Dendritic cell treated with granulocyte-macrophage colony-stimulating factor and Interleukin-4, amounts not matched to agents 40 ng/mL and 50 ng/mL, for 4 days (primary cell): ENCODE measurements at regions of chr13 and their contacts with region 1.

Region 1: DNA sequence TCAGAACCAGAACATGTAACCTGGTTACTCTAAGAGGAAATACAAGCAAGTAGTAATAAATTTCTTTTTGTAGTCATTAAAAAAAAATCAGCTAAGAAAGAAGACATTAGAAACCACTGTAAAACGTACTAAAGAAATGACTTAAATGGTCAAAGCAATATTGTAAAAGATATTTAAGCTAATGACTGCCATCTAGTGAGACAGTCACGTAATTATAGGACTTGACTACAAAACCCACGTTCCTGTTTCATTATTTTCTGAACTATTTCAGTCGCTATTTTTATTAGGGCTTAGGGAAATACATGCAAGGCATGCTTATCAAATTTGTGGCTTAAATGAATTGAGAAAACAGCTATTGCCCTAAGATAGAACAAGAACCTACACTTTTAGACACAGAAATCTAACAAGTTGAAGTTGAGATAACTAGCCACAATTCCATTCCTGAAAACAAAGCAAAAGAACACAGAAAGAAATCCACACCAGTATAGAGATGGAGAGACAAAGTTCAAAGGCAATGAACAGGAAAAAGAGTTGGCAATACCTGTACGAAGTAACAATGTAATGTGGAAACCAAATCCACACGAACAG is 17.9 kb downstream of the ALG5 start:
- H3K4me3 Mint-ChIP-seq: no peak overlapping the region
- H3K27ac Mint-ChIP-seq: no peak overlapping the region
- H3K4me1 Mint-ChIP-seq: peaks cover 5% of the 10 kb centered on the region
- H3K27me3 Mint-ChIP-seq: no peaks in the 10 kb centered on the region

Region 2: GRCh38 chr13:36282818-36283445 is 698.3 kb before region 1 on chr13:
- intact Hi-C with region 1: loop called (anchors 5 kb)
- H3K4me3 Mint-ChIP-seq: no peak overlapping the region
- H3K27ac Mint-ChIP-seq: no peak overlapping the region
- H3K4me1 Mint-ChIP-seq: no peaks in the 10 kb centered on the region
- H3K27me3 Mint-ChIP-seq: no peaks in the 10 kb centered on the region

Region 3: GRCh38 chr13:36858290-36858689 is 123.0 kb before region 1 on chr13:
- intact Hi-C with region 1: loop called (anchors 5 kb)
- H3K4me3 Mint-ChIP-seq: no peak overlapping the region
- H3K27ac Mint-ChIP-seq: no peak overlapping the region
- H3K4me1 Mint-ChIP-seq: no peaks in the 10 kb centered on the region
- H3K27me3 Mint-ChIP-seq: no peaks in the 10 kb centered on the region